Activated T-helper 2 cell treated with anti-CD3 and anti-CD28 coated beads, Interferon-gamma antibody, Interleukin-2, Interleukin-4, amounts not matched to agents 10 μg/mL and 5 μg/mL and 100 μg/mL, durations not matched to agents 14 hours and 24 hours and 36 hours (primary cell): ENCODE measurements at regions of chr2 and their contacts with region 1.

Region 1: DNA sequence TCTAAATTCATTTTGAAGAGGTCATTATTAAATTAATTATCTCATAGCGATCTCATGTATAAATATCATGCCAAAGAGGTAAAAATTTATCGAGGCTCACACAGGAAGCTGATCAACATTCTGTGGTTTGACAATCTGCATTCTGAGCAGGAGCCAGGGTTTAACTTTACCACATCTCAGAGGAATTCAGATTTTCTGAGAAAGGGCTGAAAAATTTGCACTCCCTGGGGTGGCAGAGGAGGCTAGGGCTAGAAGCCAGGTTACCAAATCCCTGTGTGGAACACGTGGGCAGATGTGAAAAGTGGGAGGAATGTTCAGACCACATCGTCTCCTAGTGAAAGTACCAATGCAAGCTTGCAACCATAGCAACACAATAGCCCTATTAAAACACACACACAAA is 63.5 kb upstream of the CTLA4 start:
- DNase-seq: peak; percentile 36
- H3K4me3 Mint-ChIP-seq: no peak overlapping the region
- H3K27ac Mint-ChIP-seq: peak overlapping the region; percentile 61
- H3K4me1 Mint-ChIP-seq: peaks cover 68% of the 10 kb centered on the region
- H3K27me3 Mint-ChIP-seq: no peaks in the 10 kb centered on the region

Region 2: GRCh38 chr2:203201426-203201825 is 602.6 kb before region 1 on chr2:
- intact Hi-C with region 1: no loop called
- DNase-seq: no peak
- H3K4me3 Mint-ChIP-seq: no peak overlapping the region
- H3K27ac Mint-ChIP-seq: no peak overlapping the region
- H3K4me1 Mint-ChIP-seq: no peaks in the 10 kb centered on the region
- H3K27me3 Mint-ChIP-seq: no peaks in the 10 kb centered on the region

Region 3: DNA sequence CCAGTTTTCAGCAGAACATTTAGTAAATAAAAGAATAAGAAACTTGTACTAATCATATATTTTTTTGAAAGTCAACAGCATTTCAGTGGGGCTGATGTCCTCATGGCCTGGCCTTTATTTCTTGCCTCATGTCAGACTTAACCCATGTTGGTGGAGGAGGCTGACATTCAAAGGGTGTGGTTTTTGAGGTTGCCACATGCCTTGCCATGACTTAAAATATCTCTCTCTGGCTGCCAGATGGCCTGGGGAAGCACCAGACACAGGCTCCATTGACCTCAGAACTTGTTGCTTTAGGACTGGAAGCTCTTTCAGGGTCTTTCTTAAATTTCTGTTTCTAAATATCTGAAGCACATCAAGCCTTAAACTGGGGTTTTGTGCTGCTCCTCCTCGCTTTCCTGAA is 130.1 kb before region 1 on chr2:
- intact Hi-C with region 1: loop called (anchors 5 kb)
- DNase-seq: peak; percentile 46
- H3K4me3 Mint-ChIP-seq: peak overlapping the region; percentile 51
- H3K27ac Mint-ChIP-seq: peak overlapping the region; percentile 85
- H3K4me1 Mint-ChIP-seq: peaks cover 47% of the 10 kb centered on the region
- H3K27me3 Mint-ChIP-seq: no peaks in the 10 kb centered on the region

Region 4: DNA sequence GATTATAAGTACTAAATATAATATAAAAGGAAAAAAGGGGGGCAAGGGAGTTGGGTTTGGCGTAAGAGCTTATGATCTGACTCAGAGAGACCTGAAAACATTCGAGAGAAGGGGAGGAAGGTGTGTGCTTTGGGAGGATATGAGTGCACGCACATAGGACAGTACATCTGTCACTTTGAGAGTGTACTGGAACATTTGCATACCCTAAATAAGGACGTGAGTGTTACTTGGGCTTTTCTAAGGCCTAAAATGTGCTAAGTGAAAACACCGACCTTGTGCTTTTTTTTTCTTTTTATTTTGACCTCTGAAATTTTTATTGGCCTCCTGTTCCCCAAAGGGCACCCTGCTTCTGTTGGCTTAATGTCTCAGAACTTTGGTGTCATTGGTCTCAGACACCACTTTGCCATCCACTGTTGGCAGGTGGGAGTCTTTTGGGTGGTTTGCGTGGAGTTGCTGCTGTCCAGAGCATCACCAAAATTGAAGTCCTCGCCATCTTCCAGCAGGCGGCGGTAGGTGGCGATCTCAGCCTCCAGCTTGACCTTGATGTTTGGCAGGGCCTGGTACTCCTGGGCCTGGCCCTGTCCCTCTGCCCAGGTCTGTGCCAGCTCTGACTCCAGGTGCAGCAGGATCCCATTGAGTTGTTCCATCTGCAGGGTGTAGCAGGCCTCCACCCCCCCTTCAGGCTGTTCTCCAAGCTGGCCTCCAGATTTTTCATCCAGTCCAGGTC is 40.0 kb before region 1 on chr2:
- intact Hi-C with region 1: loop called (anchors 2 kb)
- DNase-seq: no peak
- H3K4me3 Mint-ChIP-seq: no peak overlapping the region
- H3K27ac Mint-ChIP-seq: peak overlapping the region; percentile 86
- H3K4me1 Mint-ChIP-seq: peaks cover 51% of the 10 kb centered on the region
- H3K27me3 Mint-ChIP-seq: no peaks in the 10 kb centered on the region